ENCODE measurements at regions of chr6 and their contacts with region 1.

Region 1: GRCh38 chr6:143677891-143678791 is at the start of gene PHACTR2:
- DNase-seq: peak; percentile 90
- ATAC-seq: peak; percentile 91
- H3K4me3 ChIP-seq: peak within 1 kb of the TSS; percentile 68 to 89
- H3K27ac ChIP-seq: peak within 1 kb of the TSS; percentile 96 to 99
- H3K4me1 ChIP-seq: peaks cover 3 to 4% of the 10 kb centered on the region in 2 donors
- H3K27me3 ChIP-seq: no peaks in the 10 kb centered on the region
- total RNA-seq, gene PHACTR2: 87.1 to 96.8 TPM

Region 2: DNA sequence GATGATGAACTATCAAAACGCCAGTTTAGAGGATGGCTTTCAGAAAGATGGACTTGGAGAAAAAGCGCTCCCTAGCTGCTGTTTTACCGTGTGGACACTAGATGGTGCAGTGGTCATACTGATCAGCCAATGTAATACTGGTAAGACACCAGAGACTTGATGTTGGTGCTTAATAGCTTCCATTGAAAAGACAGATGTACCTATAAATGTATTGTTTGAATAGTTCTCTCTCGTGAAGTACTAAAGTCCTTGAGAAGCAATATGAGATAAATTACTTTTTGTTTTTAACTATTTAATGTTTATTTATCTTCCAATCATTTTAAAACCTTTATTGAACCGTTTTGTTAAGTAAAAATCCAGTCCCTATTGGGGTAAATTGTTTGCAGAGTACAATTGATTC is 102.7 kb before region 1 on chr6:
- intact Hi-C with region 1: loop called in 1 of 2 experiments (anchors 5 kb)
- DNase-seq: peak in 1 of 2 donors; percentile 55
- ATAC-seq: peak; percentile 92
- H3K4me3 ChIP-seq: no peak overlapping the region
- H3K27ac ChIP-seq: no peak overlapping the region
- H3K4me1 ChIP-seq: peaks cover 0 to 6% of the 10 kb centered on the region in 2 donors
- H3K27me3 ChIP-seq: no peaks in the 10 kb centered on the region

Region 3: DNA sequence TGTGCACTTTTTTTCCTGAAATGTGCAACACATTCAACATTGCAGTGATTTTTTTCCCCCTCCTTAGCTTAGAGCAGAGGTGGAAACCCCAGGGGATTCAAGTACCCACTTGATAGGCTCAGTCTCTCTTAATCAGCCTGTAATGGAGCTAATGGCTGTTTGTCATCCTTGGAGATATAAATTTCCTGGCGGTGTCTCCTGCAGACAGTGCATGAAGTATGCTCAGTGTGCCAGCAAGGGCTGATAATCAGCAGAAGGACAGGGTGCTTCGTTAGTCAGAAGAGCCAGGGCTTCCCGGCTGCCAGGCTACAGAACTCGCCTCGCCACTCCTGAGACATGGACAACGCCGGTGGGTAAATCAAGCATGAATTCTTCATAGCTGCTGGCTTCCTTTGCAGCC is 70.2 kb before region 1 on chr6:
- intact Hi-C with region 1: loop called (anchors 10 kb)
- DNase-seq: no peak
- ATAC-seq: no peak
- H3K4me3 ChIP-seq: no peak overlapping the region
- H3K27ac ChIP-seq: no peak overlapping the region
- H3K4me1 ChIP-seq: peaks cover 0 to 3% of the 10 kb centered on the region in 2 donors
- H3K27me3 ChIP-seq: no peaks in the 10 kb centered on the region

Region 4: GRCh38 chr6:143615785-143616184 is 62.4 kb before region 1 on chr6:
- intact Hi-C with region 1: loop called in 1 of 2 experiments (anchors 10 kb)
- DNase-seq: no peak
- ATAC-seq: no peak
- H3K4me3 ChIP-seq: no peak overlapping the region
- H3K27ac ChIP-seq: no peak overlapping the region
- H3K4me1 ChIP-seq: peaks cover 3 to 6% of the 10 kb centered on the region in 2 donors
- H3K27me3 ChIP-seq: no peaks in the 10 kb centered on the region

Region 5: GRCh38 chr6:143842902-143843676 is 164.9 kb after region 1 on chr6 and contains the start of gene LTV1:
- intact Hi-C with region 1: loop called (anchors 5 to 10 kb)
- DNase-seq: peak; percentile 98
- ATAC-seq: peak; percentile 100
- H3K4me3 ChIP-seq: peak within 1 kb of the TSS; percentile 56 to 71
- H3K27ac ChIP-seq: peak within 1 kb of the TSS; percentile 84 to 92
- H3K4me1 ChIP-seq: peaks cover 0 to 10% of the 10 kb centered on the region in 2 donors
- H3K27me3 ChIP-seq: no peaks in the 10 kb centered on the region
- total RNA-seq, gene LTV1: 16.5 to 16.7 TPM

Region 6: GRCh38 chr6:144013486-144013909 is 335.4 kb after region 1 on chr6:
- intact Hi-C with region 1: loop called in 1 of 2 experiments (anchors 5 kb)
- DNase-seq: peak; percentile 83 to 92
- ATAC-seq: peak; percentile 81
- H3K4me3 ChIP-seq: no peak overlapping the region
- H3K27ac ChIP-seq: no peak overlapping the region
- H3K4me1 ChIP-seq: no peaks in the 10 kb centered on the region
- H3K27me3 ChIP-seq: peaks cover 0 to 2% of the 10 kb centered on the region in 2 donors

Measured in aorta (tissue), 5 donors.